ENCODE measurements at regions of chr1 and their contacts with region 1.

Region 1: GRCh38 chr1:151098126-151098525 is 27.6 kb downstream of the GABPB2 start:
- DNase-seq: no peak
- ATAC-seq: no peak
- H3K4me3 ChIP-seq: no peak overlapping the region
- H3K4me3 Mint-ChIP-seq: no peak overlapping the region
- H3K27ac ChIP-seq: no peak overlapping the region
- H3K27ac Mint-ChIP-seq: no peak overlapping the region
- H3K4me1 ChIP-seq: no peaks in the 10 kb centered on the region
- H3K4me1 Mint-ChIP-seq: no peaks in the 10 kb centered on the region
- H3K27me3 ChIP-seq: no peaks in the 10 kb centered on the region
- H3K27me3 Mint-ChIP-seq: no peaks in the 10 kb centered on the region

Region 2: DNA sequence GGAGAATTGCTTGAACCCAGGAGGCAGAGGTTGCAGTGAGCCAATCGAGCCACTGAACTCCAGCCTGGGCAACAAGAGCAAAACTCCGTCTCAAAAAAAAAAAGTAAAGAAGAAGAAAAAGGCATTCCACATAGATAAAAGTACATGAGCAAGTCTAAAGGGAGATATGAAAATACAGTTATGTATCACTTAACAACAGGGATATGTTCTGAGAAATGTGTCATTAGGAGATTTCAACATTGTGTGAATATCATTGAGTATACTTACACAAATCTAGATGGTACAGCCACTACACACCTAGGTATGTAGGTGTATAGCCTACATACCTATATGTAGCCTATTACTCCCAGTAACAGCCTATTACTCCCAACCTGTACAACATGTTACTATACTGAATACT is 234.4 kb before region 1 on chr1:
- CTCF ChIA-PET with region 1: interaction called in 1 of 2 experiments, 10 read pairs
- POLR2A ChIA-PET with region 1: no interaction called
- DNase-seq: no peak
- ATAC-seq: no peak
- H3K4me3 ChIP-seq: no peak overlapping the region
- H3K4me3 Mint-ChIP-seq: no peak overlapping the region
- H3K27ac ChIP-seq: no peak overlapping the region
- H3K27ac Mint-ChIP-seq: no peak overlapping the region
- H3K4me1 ChIP-seq: peaks cover 3 to 8% of the 10 kb centered on the region in 2 experiments
- H3K4me1 Mint-ChIP-seq: peaks cover 29 to 36% (median 35%) of the 10 kb centered on the region in 3 donors
- H3K27me3 ChIP-seq: no peaks in the 10 kb centered on the region
- H3K27me3 Mint-ChIP-seq: no peaks in the 10 kb centered on the region

Region 3: DNA sequence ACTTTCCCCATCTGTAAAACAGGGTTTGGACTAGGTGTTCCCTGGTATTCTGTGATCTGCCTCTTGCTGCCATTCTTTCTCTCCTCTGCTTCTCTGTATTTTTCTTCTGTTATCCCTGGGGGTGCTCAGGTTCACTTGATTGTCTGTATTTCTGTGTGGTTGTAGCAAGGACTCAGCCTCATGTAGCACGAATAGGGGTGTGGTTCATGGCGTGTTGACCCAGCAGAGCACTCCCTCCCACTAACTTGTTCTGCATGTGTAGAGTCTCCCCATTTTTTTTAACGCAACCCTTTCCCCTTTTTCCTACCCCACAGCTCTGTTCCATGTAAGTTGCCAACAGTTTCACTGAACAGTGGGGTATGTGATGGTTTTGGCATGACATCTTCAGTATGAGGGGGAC is 63.0 kb before region 1 on chr1:
- CTCF ChIA-PET with region 1: interaction called in 1 of 2 experiments, 10 read pairs
- POLR2A ChIA-PET with region 1: no interaction called
- DNase-seq: no peak
- ATAC-seq: no peak
- H3K4me3 ChIP-seq: no peak overlapping the region
- H3K4me3 Mint-ChIP-seq: no peak overlapping the region
- H3K27ac ChIP-seq: no peak overlapping the region
- H3K27ac Mint-ChIP-seq: peak overlapping the region; percentile 60 to 73
- H3K4me1 ChIP-seq: no peaks in the 10 kb centered on the region
- H3K4me1 Mint-ChIP-seq: peaks cover 9 to 20% (median 11%) of the 10 kb centered on the region in 3 donors
- H3K27me3 ChIP-seq: no peaks in the 10 kb centered on the region
- H3K27me3 Mint-ChIP-seq: no peaks in the 10 kb centered on the region

Region 4: GRCh38 chr1:151165738-151166505 is 67.8 kb after region 1 on chr1 and contains the starts of genes LYSMD1 and SCNM1:
- CTCF ChIA-PET with region 1: interaction called, 8 to 12 read pairs
- POLR2A ChIA-PET with region 1: interaction called, 4 read pairs
- DNase-seq: peak; percentile 91 to 98 (median 96)
- ATAC-seq: peak; percentile 95 to 98 (median 96)
- H3K4me3 ChIP-seq: peak within 1 kb of the TSS; percentile 88 to 99
- H3K4me3 Mint-ChIP-seq: peak within 1 kb of the TSS; percentile 85 to 99 (median 98)
- H3K27ac ChIP-seq: peak within 1 kb of the TSS; percentile 58
- H3K27ac Mint-ChIP-seq: peak within 1 kb of the TSS; percentile 94 to 98
- H3K4me1 ChIP-seq: peaks cover 12 to 38% of the 10 kb centered on the region in 2 experiments
- H3K4me1 Mint-ChIP-seq: peaks cover 54 to 58% (median 55%) of the 10 kb centered on the region in 3 donors
- H3K27me3 ChIP-seq: no peaks in the 10 kb centered on the region
- H3K27me3 Mint-ChIP-seq: peaks cover 0 to 3% of the 10 kb centered on the region in 2 donors
- total RNA-seq, gene LYSMD1: 0.68 to 3.2 (median 2.3) TPM
- total RNA-seq, gene SCNM1: 35.4 to 60.4 (median 52.4) TPM

Region 5: DNA sequence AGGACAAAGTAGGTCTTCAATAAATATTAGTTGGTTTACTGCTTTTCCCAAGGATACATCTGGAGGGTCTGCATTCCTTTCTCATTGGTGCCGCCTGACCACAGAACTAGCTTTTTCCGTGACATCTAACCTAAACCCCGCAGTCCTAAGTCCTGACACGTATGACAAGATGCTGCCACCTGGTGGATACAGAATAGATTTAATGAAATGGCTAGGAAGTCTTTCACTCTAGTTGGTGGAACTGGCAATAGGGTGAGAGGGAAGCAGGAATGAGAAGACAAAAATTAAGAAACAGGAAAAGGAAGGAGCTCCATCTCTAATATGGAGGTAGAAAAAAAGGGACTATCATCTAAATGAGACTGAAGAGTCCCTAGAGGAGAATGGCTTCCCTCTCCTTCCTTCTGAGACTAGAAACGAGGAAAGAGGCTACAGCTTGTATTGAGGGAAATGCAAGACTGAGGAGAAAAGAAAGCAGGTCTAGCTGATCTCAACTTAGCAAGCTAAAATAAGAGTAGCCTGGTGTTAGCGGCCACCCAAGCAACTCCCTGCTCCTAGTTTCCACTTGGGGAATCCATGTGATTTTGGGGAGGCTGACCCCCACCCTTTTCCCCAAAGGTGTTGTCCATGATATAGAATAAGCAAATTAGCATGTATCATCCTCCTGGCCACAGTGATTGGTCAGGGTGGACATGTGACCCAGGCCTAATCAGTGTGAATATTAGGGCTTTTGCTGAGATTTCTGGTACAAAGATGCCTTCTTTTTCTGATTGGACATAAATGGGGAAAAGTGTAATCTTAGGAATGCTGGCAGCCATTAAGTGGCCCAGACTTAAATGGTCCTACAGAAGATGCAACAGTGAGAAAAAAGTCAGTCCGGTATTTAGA is 243.0 kb after region 1 on chr1:
- CTCF ChIA-PET with region 1: interaction called, 14 read pairs
- POLR2A ChIA-PET with region 1: no interaction called
- DNase-seq: peak in 28 of 35 experiments; percentile 14 to 83 (median 32)
- ATAC-seq: peak; percentile 84 to 87 (median 86)
- H3K4me3 ChIP-seq: no peak overlapping the region
- H3K4me3 Mint-ChIP-seq: no peak overlapping the region
- H3K27ac ChIP-seq: peak overlapping the region; percentile 35
- H3K27ac Mint-ChIP-seq: peak overlapping the region; percentile 7 to 70
- H3K4me1 ChIP-seq: peaks cover 3 to 12% of the 10 kb centered on the region in 2 experiments
- H3K4me1 Mint-ChIP-seq: peaks cover 13 to 39% (median 24%) of the 10 kb centered on the region in 3 donors
- H3K27me3 ChIP-seq: no peaks in the 10 kb centered on the region
- H3K27me3 Mint-ChIP-seq: no peaks in the 10 kb centered on the region